ENCODE measurements at regions of chr13 and their contacts with region 1.

Region 1: DNA sequence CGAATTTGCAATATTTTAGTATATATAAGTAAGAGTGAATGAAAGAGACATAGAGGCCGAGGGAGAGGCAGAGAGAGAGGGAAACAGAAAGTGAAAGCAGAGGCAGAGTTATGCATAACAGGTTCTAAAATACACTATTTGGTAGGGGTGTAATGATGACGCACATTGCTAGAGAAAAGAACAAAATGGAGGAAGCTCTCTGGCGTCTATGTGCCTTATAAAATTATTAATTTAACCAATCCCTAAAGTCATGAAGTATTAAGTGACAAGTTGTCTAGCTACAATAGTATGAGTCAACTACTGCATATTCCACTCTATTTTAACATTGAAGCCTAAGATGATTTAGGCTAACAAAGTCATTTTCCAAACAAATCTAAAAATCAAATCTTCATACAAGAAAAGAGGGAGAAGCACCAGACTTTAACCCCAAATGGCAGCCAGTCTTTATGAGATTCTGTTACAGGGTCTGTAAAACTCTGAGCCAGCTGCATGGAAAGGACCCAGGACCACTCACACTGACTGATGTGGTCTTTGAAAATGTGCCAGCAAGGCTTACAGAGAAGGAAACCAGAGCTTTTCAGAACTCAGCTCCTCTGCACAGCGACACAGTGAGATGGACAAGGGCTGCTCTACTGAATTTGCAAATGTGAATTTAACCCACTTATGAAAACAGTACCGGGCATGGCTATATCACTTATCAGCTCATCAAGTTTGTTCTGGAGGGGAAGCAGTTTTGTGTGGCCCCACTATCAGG is 99.0 kb upstream of the SERP2 start:
- DNase-seq: peak in 8 of 9 experiments; percentile 17 to 91 (median 37)
- ATAC-seq: peak; percentile 92
- H3K4me3 ChIP-seq: peak overlapping the region; percentile 34 to 41
- H3K4me3 Mint-ChIP-seq: peak overlapping the region; percentile 73
- H3K27ac ChIP-seq: peak overlapping the region; percentile 81 to 96
- H3K27ac Mint-ChIP-seq: peak overlapping the region; percentile 98
- H3K4me1 ChIP-seq: peaks cover 35% of the 10 kb centered on the region
- H3K4me1 Mint-ChIP-seq: peaks cover 51% of the 10 kb centered on the region
- H3K27me3 ChIP-seq: no peaks in the 10 kb centered on the region
- H3K27me3 Mint-ChIP-seq: no peaks in the 10 kb centered on the region
- CTCF ChIP-seq: no peak

Region 2: DNA sequence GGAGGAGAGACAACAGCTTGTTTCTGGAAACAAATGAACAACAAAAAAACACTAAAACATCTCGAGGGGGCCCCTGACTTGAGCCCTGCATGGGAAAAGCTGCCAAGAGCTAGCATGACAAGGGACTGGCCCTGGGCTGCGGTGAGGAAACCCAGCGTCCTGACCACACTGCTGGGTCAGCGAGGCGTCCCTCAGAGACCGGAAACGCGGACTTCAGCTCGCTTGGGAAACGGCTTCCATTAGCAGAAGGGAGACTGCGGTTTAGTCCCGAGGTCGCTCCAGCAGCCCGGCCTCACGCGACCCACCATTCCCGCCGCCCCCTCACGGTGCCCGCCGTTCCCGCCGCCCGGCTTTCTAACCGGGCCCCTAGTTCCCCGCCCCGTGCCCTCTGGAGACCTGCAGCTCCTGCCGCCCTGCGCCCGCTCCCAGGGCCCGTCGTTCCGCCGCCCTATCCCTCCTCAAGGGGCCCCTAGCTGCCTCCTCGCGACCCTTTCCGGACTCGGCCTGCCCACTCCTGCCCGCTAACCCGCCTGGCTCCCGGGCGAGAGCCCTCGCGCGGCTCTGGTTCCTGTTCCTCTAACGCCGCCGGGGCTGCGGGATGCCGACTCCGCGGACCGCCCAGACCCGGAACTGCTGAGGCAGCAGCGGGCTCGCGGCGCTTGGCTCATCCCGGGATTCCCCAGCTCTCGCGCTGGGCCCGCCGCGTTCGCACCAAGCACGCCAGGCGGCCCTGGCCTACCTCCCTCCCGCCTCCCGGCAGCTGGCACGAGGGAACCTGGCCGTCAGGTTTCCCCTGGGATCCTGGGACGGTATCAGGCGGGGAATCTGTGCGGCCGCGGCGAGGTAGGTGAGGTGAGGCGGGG is 395.5 kb before region 1 on chr13 and contains the start of gene CCDC122:
- CTCF ChIA-PET with region 1: no interaction called
- POLR2A ChIA-PET with region 1: no interaction called
- intact Hi-C with region 1: loop called (anchors 5 to 10 kb)
- DNase-seq: peak; percentile 37 to 89 (median 69)
- ATAC-seq: peak; percentile 78
- H3K4me3 ChIP-seq: peak within 1 kb of the TSS; percentile 56 to 66
- H3K4me3 Mint-ChIP-seq: peak within 1 kb of the TSS; percentile 90
- H3K27ac ChIP-seq: peak within 1 kb of the TSS in 1 of 2 experiments; percentile 61
- H3K27ac Mint-ChIP-seq: peak within 1 kb of the TSS; percentile 84
- H3K4me1 ChIP-seq: peaks cover 10% of the 10 kb centered on the region
- H3K4me1 Mint-ChIP-seq: peaks cover 14% of the 10 kb centered on the region
- H3K27me3 ChIP-seq: no peaks in the 10 kb centered on the region
- H3K27me3 Mint-ChIP-seq: peaks cover 11% of the 10 kb centered on the region
- CTCF ChIP-seq: no peak
- total RNA-seq, gene CCDC122: not detected

Region 3: GRCh38 chr13:43915451-43915850 is 359.2 kb before region 1 on chr13:
- CTCF ChIA-PET with region 1: no interaction called
- POLR2A ChIA-PET with region 1: no interaction called
- intact Hi-C with region 1: no loop called
- DNase-seq: no peak
- ATAC-seq: no peak
- H3K4me3 ChIP-seq: no peak overlapping the region
- H3K4me3 Mint-ChIP-seq: no peak overlapping the region
- H3K27ac ChIP-seq: no peak overlapping the region
- H3K27ac Mint-ChIP-seq: no peak overlapping the region
- H3K4me1 ChIP-seq: no peaks in the 10 kb centered on the region
- H3K4me1 Mint-ChIP-seq: no peaks in the 10 kb centered on the region
- H3K27me3 ChIP-seq: no peaks in the 10 kb centered on the region
- H3K27me3 Mint-ChIP-seq: peaks cover 8% of the 10 kb centered on the region
- CTCF ChIP-seq: no peak

Region 4: DNA sequence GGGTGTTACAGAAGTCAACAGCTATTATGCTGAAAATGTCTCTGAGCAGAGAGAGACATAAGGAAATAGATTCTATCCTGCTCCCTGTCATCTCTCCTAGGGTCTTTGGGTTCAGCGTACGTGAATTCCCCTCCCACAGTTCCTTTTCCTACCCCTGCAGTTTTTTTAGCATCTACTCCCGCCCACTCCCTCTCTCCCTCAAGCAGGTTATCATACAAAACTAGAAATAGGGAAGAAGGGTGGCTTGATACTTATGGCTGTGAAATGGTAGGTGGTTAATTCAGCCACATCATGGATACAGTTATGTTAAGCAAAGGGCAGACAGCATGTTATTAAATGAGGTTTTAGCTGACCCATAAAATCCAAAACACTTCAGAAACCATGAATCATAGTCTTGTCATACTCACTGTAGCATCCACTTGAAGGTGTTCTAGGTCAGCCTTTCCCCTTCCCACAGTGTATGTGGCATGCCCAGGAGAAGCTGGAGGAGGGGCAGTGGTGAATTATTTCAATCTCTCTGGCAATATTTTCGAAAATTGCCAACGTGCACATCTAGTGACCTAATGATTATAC is 137.8 kb before region 1 on chr13:
- CTCF ChIA-PET with region 1: no interaction called
- POLR2A ChIA-PET with region 1: interaction called, 3 read pairs
- intact Hi-C with region 1: loop called in 1 of 2 experiments (anchors 1 kb)
- DNase-seq: no peak
- ATAC-seq: no peak
- H3K4me3 ChIP-seq: no peak overlapping the region
- H3K4me3 Mint-ChIP-seq: no peak overlapping the region
- H3K27ac ChIP-seq: no peak overlapping the region
- H3K27ac Mint-ChIP-seq: no peak overlapping the region
- H3K4me1 ChIP-seq: peaks cover 7% of the 10 kb centered on the region
- H3K4me1 Mint-ChIP-seq: peaks cover 9% of the 10 kb centered on the region
- H3K27me3 ChIP-seq: no peaks in the 10 kb centered on the region
- H3K27me3 Mint-ChIP-seq: peaks cover 6% of the 10 kb centered on the region
- CTCF ChIP-seq: no peak

Region 5: DNA sequence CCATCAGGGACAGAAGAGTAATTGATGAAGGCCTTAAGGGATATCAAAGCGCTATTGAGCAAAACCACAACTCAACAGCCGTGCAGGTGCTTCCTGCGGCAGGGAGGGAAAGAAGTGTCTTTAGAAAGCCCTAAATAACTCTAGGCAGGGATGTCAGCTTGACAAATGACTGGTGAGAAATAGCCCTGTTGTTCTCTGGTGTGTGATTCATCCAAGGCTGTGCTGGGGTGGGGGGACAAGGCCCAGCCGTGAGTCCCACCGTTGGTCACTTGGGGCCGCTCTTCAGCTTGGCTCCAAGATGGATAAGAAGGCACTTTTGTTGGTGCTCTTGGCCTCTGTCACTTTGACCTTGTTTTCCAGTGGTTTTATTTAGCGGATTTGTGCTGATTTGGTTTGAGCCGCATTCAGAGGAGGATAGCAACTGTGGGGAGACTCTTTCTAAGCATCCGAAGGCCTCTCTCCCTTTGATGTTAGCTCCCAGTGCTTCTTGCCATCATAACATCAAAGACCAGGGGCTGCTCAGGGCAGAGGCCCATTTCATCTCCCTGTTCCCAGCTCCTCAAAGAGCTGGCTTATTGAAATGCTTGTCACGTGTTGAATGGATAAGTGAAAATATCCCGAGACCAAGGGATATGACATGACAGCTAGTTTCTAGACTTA is 31.3 kb before region 1 on chr13:
- CTCF ChIA-PET with region 1: no interaction called
- POLR2A ChIA-PET with region 1: no interaction called
- intact Hi-C with region 1: no loop called
- DNase-seq: peak in 4 of 9 experiments; percentile 18 to 44 (median 27)
- ATAC-seq: peak; percentile 46
- H3K4me3 ChIP-seq: no peak overlapping the region
- H3K4me3 Mint-ChIP-seq: no peak overlapping the region
- H3K27ac ChIP-seq: no peak overlapping the region
- H3K27ac Mint-ChIP-seq: no peak overlapping the region
- H3K4me1 ChIP-seq: no peaks in the 10 kb centered on the region
- H3K4me1 Mint-ChIP-seq: peaks cover 5% of the 10 kb centered on the region
- H3K27me3 ChIP-seq: no peaks in the 10 kb centered on the region
- H3K27me3 Mint-ChIP-seq: peaks cover 2% of the 10 kb centered on the region
- CTCF ChIP-seq: no peak

Region 6: DNA sequence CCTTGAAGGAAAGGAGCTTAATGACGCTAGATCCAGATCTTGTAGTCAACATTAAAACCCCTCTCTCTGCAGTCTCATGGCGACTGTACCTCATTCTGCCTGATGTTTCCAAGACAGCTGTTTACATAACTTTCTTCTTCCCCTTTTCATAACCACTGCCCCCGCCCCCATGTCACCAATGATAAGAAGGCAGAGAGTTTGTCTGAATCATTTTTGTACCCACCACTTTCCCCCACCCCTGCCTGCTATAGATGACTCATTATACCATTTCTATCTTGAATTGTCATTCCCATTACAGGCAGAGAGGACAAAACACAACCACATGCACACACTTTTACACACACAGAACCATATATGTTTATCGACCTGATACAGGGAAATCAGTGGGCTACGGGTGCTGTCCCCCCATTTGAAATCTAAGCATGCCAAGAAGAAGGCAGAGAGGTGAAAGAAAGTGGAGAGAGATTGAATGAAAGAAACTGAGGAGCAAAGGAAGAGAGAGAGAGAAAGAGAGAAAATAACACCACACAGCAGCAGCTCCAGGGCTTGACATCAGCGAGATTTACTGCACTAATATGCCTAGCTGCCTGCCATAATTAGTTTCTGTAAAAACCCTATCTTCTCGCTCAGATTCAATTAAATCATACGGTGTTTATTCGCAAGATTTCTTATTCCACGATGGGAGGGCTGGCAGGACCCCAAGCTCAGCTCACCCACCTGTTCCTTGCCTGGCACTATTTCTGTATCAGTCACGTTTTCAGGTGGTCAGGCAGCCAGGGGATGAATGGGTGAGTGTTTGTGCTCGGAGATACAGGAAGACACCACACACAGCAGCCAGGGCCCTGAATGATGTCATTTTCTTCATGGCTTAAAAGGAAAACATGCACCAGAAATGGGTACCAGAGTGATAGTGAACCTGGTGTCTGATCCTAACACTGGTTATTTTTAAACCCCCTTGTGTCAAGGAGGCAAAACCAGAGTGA is 15.3 kb before region 1 on chr13:
- CTCF ChIA-PET with region 1: no interaction called
- POLR2A ChIA-PET with region 1: no interaction called
- intact Hi-C with region 1: loop called in 1 of 2 experiments (anchors 1 kb)
- DNase-seq: peak in 8 of 9 experiments; percentile 26 to 84 (median 57)
- ATAC-seq: peak; percentile 83
- H3K4me3 ChIP-seq: no peak overlapping the region
- H3K4me3 Mint-ChIP-seq: peak overlapping the region; percentile 68
- H3K27ac ChIP-seq: no peak overlapping the region
- H3K27ac Mint-ChIP-seq: peak overlapping the region; percentile 89
- H3K4me1 ChIP-seq: peaks cover 11% of the 10 kb centered on the region
- H3K4me1 Mint-ChIP-seq: peaks cover 19% of the 10 kb centered on the region
- H3K27me3 ChIP-seq: no peaks in the 10 kb centered on the region
- H3K27me3 Mint-ChIP-seq: no peaks in the 10 kb centered on the region
- CTCF ChIP-seq: no peak

Region 7: GRCh38 chr13:44293908-44294735 is 19.5 kb after region 1 on chr13:
- CTCF ChIA-PET with region 1: no interaction called
- POLR2A ChIA-PET with region 1: no interaction called
- intact Hi-C with region 1: no loop called
- DNase-seq: no peak
- ATAC-seq: no peak
- H3K4me3 ChIP-seq: no peak overlapping the region
- H3K4me3 Mint-ChIP-seq: no peak overlapping the region
- H3K27ac ChIP-seq: no peak overlapping the region
- H3K27ac Mint-ChIP-seq: no peak overlapping the region
- H3K4me1 ChIP-seq: no peaks in the 10 kb centered on the region
- H3K4me1 Mint-ChIP-seq: peaks cover 11% of the 10 kb centered on the region
- H3K27me3 ChIP-seq: no peaks in the 10 kb centered on the region
- H3K27me3 Mint-ChIP-seq: peaks cover 7% of the 10 kb centered on the region
- CTCF ChIP-seq: no peak

Region 8: GRCh38 chr13:44306401-44307192 is 32.0 kb after region 1 on chr13:
- CTCF ChIA-PET with region 1: no interaction called
- POLR2A ChIA-PET with region 1: interaction called, 4 read pairs
- intact Hi-C with region 1: loop called in 1 of 2 experiments (anchors 1 kb)
- DNase-seq: peak in 1 of 9 experiments; percentile 22
- ATAC-seq: peak; percentile 48
- H3K4me3 ChIP-seq: peak overlapping the region in 1 of 2 experiments; percentile 7
- H3K4me3 Mint-ChIP-seq: peak overlapping the region; percentile 64
- H3K27ac ChIP-seq: no peak overlapping the region
- H3K27ac Mint-ChIP-seq: peak overlapping the region; percentile 24
- H3K4me1 ChIP-seq: peaks cover 10% of the 10 kb centered on the region
- H3K4me1 Mint-ChIP-seq: peaks cover 27% of the 10 kb centered on the region
- H3K27me3 ChIP-seq: no peaks in the 10 kb centered on the region
- H3K27me3 Mint-ChIP-seq: peaks cover under 1% of the 10 kb centered on the region
- CTCF ChIP-seq: peak; percentile 12

Region 9: GRCh38 chr13:44988973-44989817 is 714.6 kb after region 1 on chr13 and contains the starts of genes GPALPP1 and NUFIP1:
- CTCF ChIA-PET with region 1: no interaction called
- POLR2A ChIA-PET with region 1: no interaction called
- intact Hi-C with region 1: loop called in 1 of 2 experiments (anchors 5 kb)
- DNase-seq: peak; percentile 79 to 96 (median 93)
- ATAC-seq: peak; percentile 94
- H3K4me3 ChIP-seq: peak within 1 kb of the TSS; percentile 88 to 92
- H3K4me3 Mint-ChIP-seq: peak within 1 kb of the TSS; percentile 100
- H3K27ac ChIP-seq: peak within 1 kb of the TSS; percentile 86 to 90
- H3K27ac Mint-ChIP-seq: peak within 1 kb of the TSS; percentile 99
- H3K4me1 ChIP-seq: peaks cover 20% of the 10 kb centered on the region
- H3K4me1 Mint-ChIP-seq: peaks cover 64% of the 10 kb centered on the region
- H3K27me3 ChIP-seq: no peaks in the 10 kb centered on the region
- H3K27me3 Mint-ChIP-seq: no peaks in the 10 kb centered on the region
- CTCF ChIP-seq: no peak
- total RNA-seq, gene GPALPP1: 16.7 to 17.8 TPM
- total RNA-seq, gene NUFIP1: 5.2 to 6.1 TPM